Prostate gland (tissue), 2 donors: ENCODE measurements at regions of chr7 and their contacts with region 1.

Region 1: GRCh38 chr7:106736508-106737201 is 75.7 kb upstream of the CCDC71L start:
- DNase-seq: peak; percentile 23
- H3K4me3 ChIP-seq: no peak overlapping the region
- H3K27ac ChIP-seq: no peak overlapping the region
- H3K4me1 ChIP-seq: no peaks in the 10 kb centered on the region
- H3K27me3 ChIP-seq: no peaks in the 10 kb centered on the region
- CTCF ChIP-seq: peak in 3 of 4 experiments; percentile 53 to 74 (median 64)
- POLR2A ChIP-seq: no peak

Region 2: DNA sequence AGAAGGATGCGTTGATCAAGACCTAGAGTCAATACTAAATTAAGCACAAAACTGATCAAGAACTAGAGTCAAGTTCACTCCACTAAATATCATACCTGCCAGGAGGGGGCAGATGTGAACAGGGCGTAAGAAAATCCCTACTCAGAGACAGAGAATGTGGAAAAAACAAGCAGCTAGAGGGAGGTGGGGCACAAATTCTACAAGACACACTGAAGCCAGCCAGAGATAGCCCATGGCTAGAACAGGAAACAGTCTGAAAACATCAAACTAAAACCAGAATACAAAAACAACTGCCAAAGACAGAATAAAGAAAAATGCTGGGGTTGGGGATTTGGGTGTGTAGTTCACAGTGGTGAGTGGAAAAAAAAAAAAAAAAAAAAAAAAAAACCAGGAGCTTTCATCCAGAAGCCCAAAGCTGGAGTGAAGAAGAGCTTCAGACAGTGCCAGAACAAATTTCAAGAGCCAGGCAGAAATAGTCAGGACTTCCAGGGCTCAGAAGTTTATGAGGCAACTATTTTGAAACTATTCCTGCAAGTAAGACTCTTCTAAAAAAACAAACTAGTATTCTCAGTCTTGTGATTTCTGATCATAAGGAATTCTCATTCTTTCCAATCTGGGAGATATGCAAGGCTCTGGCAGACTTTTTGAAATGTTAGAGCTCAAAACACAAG is 194.0 kb before region 1 on chr7:
- intact Hi-C with region 1: loop called (anchors 5 kb)
- DNase-seq: peak; percentile 31
- H3K4me3 ChIP-seq: no peak overlapping the region
- H3K27ac ChIP-seq: peak overlapping the region; percentile 24 to 25
- H3K4me1 ChIP-seq: no peaks in the 10 kb centered on the region
- H3K27me3 ChIP-seq: no peaks in the 10 kb centered on the region
- CTCF ChIP-seq: peak; percentile 13 to 69 (median 58)
- POLR2A ChIP-seq: no peak

Region 3: DNA sequence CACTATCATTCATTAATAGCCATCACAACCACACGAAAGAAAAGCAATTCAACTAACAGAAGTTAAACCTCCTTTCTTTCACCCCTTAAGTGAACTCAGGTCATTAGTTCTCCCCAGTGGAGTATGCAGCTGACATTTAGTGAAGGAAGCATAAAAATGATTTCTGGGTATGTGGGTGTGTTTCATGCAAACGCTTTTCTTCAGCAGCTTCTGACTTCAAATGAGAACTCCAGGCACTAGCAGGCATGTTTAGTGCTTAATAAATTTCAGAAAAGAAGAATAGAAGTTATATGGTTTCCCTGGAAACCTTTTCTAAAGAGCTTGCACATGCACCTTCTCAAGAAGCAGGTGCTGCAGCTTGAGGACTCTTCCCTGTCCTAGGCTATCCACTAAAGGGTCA is 190.9 kb after region 1 on chr7:
- intact Hi-C with region 1: no loop called
- DNase-seq: no peak
- H3K4me3 ChIP-seq: no peak overlapping the region
- H3K27ac ChIP-seq: no peak overlapping the region
- H3K4me1 ChIP-seq: no peaks in the 10 kb centered on the region
- H3K27me3 ChIP-seq: no peaks in the 10 kb centered on the region
- CTCF ChIP-seq: no peak
- POLR2A ChIP-seq: no peak

Region 4: GRCh38 chr7:107078517-107078966 is 341.9 kb after region 1 on chr7:
- intact Hi-C with region 1: no loop called
- DNase-seq: no peak
- H3K4me3 ChIP-seq: no peak overlapping the region
- H3K27ac ChIP-seq: no peak overlapping the region
- H3K4me1 ChIP-seq: no peaks in the 10 kb centered on the region
- H3K27me3 ChIP-seq: no peaks in the 10 kb centered on the region
- CTCF ChIP-seq: no peak
- POLR2A ChIP-seq: no peak